ENCODE measurements at regions of chr7 and their contacts with region 1.

Region 1: DNA sequence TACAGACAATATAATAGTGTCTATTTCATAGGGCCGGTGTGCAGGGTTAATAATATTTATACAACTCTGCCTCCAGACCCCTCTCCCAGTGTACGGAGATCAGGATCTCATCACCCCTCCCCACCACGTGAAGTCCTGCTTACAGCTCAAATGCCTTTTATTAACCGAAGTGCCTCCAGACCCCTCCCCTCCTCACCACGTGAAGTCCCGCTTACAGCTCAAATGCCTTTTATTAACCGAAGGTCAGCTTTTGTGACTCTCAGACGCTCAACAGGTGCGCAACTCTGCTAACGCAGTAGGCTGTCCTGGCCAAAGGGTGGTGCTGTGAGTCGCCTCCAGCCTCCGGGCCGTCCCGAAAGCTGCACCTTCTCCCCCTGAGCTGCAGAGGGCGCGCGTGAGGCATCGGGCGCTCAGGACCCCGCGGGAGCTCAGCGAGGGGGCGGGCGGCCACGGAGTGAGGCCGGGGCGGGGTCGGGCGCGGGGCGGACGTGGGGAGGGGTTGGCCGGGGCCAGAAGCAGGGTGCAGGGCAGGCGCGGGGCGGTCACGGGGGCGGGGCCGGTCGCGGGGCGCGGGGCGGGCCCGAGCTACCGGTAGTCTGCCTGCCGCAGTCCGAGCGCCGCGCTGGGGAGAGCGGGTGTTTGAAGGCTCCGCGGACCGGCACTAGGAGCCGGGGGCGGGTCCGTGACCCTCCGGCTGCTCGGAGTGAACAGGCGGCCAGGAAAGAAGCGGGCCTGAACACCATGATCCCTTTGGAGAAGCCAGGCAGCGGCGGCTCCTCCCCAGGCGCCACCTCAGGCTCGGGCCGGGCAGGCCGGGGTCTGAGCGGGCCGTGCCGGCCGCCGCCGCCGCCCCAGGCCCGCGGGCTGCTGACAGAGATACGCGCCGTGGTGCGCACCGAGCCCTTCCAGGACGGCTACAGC is at the start of gene STK17A:
- H3K4me3 ChIP-seq: peak within 1 kb of the TSS; percentile 82
- H3K27ac ChIP-seq: peak within 1 kb of the TSS; percentile 87
- H3K4me1 ChIP-seq: peaks cover 21% of the 10 kb centered on the region
- CTCF ChIP-seq: peak; percentile 98

Region 2: DNA sequence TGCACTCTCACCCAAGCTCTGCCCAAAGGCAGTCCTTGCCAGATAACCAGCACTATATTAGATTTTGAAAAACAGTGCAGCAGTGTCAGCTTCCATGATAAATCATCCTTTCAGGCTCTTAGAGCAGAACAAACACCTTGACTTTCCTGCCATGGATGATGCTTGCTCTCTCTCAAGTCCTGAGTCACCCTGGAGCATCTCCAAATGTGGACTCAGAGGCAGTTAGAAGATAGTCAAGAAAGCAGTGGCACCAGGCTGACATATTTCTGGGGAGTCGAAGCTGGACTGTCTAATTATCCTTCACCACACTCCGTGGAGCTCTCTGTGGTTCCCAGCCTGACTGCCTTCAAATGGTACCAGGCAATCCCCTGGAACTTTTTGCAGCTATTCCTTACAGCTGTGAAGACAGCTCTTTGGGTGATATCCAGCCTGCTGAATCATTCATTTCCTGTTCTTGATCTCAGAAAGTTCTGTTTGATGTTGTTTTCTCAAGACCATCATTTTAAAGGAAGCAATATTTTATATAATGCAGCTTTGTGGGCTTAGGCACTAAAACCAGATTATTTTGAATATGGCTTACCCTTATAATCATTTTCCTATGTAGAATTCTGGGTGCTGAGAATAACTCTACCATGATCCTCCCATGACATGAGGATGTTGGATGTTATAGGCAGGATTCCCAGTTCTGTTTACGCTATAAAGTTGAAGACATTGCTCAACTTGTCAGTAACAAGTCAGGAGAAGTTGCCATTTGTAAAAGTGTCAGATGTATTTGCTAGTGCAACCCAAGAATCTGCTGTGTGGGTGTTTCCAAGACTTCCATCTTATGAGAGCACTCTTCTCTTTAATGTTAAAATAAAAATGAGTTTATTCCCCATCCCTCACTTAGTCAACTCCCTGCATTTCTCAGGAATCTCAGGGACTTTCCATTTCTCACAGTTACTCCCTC is 904.7 kb before region 1 on chr7:
- CTCF ChIA-PET with region 1: no interaction called
- POLR2A ChIA-PET with region 1: no interaction called
- H3K4me3 ChIP-seq: no peak overlapping the region
- H3K27ac ChIP-seq: no peak overlapping the region
- H3K4me1 ChIP-seq: no peaks in the 10 kb centered on the region
- CTCF ChIP-seq: no peak

Region 3: DNA sequence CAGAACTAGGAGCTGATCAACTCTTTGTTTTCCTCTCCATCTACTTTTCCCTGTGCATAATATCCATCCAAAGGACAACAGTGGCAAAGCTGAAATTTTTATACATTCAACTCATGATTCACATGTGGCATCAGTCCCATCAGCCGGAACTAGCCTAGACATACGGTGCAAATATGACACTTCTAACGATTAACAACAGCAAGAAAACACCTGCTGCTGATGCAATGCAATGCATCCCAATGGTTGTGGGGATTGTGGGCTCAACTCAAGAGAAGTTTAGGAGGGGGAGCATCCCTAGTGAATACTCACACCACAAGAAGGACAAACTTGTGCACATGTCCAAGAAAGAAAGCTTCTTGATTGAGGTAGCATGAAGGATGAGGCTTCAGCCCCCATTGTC is 20.4 kb before region 1 on chr7:
- CTCF ChIA-PET with region 1: interaction called, 18 read pairs
- POLR2A ChIA-PET with region 1: no interaction called
- H3K4me3 ChIP-seq: no peak overlapping the region
- H3K27ac ChIP-seq: no peak overlapping the region
- H3K4me1 ChIP-seq: no peaks in the 10 kb centered on the region
- CTCF ChIP-seq: no peak

Region 4: DNA sequence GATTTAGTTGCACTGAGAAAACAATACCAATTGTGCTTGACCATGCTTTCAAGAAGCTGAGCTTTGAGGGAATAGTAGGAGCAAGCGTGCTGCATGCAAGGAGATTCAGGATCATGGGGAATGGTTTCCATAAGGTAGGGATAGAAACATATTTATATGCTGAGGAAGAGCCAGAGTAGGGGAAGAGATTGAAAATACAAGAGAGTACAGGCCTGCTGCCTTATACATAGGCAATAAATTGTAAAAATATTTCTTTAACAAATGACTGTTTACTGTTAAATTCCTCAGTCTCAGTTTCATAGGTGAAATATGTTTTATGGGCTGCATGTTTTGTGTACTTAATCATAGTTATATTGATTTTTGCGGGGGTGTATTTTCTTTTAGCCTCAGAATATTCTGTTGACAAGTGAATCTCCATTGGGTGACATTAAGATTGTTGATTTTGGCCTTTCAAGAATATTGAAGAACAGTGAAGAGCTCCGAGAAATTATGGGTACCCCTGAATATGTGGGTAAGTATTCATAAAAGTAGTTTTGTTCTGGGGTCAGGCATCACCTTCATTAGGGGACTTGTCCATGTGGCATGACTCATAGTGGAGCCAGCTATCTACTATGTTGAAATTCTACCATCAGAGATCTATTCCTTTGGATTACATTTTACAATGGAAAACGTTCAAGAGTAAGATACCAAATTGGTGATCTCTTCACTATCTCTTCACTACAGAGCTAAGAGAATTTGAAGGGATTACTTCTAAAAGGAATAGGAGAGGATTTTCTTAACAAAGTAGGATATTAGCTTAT is 36.6 kb after region 1 on chr7:
- CTCF ChIA-PET with region 1: interaction called, 27 read pairs
- POLR2A ChIA-PET with region 1: interaction called, 14 read pairs
- H3K4me3 ChIP-seq: no peak overlapping the region
- H3K27ac ChIP-seq: no peak overlapping the region
- H3K4me1 ChIP-seq: no peaks in the 10 kb centered on the region
- CTCF ChIP-seq: no peak

Region 5: GRCh38 chr7:43647673-43648472 is 65.1 kb after region 1 on chr7:
- CTCF ChIA-PET with region 1: interaction called, 4 read pairs
- POLR2A ChIA-PET with region 1: interaction called, 11 read pairs
- H3K4me3 ChIP-seq: no peak overlapping the region
- H3K27ac ChIP-seq: no peak overlapping the region
- H3K4me1 ChIP-seq: 0 out of 2 replicates have a peak, but pooled peaks cover 6% of the 10 kb centered on the region
- CTCF ChIP-seq: no peak

Region 6: DNA sequence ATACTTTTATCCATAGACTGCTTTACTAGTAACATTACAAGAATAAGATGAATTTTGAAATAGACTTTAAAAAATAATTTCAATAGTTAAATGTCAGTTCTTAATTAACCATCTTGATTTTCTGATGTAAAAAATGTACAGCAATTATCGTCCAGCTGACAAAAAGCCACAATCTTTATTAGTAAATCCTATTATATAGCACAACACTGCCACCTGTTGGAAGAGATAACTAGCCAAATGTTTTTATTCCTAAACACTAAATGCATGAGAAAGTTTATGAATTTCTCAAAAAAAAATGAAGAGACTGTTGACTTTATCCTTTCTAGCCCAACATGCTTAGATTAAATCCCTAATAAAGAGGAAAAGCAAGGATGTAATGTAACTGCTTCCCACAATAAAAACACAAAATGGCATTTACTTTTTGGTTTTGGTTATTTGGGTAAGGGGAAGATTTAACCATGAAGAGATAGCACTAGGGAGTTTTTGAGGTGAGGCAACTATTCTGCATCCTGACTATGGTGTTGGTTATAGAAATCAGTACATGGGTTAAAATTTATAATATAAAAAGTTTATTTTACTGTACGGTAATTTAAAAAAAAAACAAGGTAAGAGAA is 138.5 kb after region 1 on chr7:
- CTCF ChIA-PET with region 1: interaction called, 25 read pairs
- POLR2A ChIA-PET with region 1: interaction called, 8 read pairs
- H3K4me3 ChIP-seq: no peak overlapping the region
- H3K27ac ChIP-seq: no peak overlapping the region
- H3K4me1 ChIP-seq: no peaks in the 10 kb centered on the region
- CTCF ChIP-seq: no peak

Region 7: DNA sequence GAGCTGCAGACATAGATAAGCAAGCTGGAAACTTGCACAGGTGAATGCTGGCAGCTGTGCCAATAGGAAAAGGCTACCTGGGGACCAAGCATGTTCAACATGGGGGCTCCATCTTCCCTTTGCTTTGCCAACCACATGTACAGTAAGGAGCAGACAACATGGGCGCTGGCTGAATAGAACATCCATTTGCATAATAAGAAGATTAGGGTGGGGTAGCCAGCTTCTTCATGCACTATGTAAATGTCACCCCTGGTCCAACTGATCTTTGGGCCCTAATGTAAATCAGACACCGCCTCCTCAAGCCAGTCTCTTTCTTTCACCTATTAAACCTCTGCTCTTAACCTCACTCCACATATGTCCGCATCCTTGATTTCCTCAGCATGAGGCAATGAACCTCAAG is 260.5 kb after region 1 on chr7:
- CTCF ChIA-PET with region 1: interaction called, 42 read pairs
- POLR2A ChIA-PET with region 1: interaction called, 12 read pairs
- H3K4me3 ChIP-seq: no peak overlapping the region
- H3K27ac ChIP-seq: no peak overlapping the region
- H3K4me1 ChIP-seq: no peaks in the 10 kb centered on the region; the same call in 1 of the 2 replicates
- CTCF ChIP-seq: no peak

Measured in HEK293 (cell line).